ENCODE measurements at regions of chr1 and their contacts with region 1.

Region 1: GRCh38 chr1:210239349-210240111 is 6.9 kb downstream of the SERTAD4 start:
- DNase-seq: no peak
- H3K4me3 ChIP-seq: no peak overlapping the region
- H3K27ac ChIP-seq: no peak overlapping the region
- H3K4me1 ChIP-seq: peaks cover 0 to 14% (median 6%) of the 10 kb centered on the region in 4 experiments; a peak in 5 of 7 replicates
- H3K27me3 ChIP-seq: peaks cover 0 to 20% (median 6%) of the 10 kb centered on the region in 4 experiments; a peak in 4 of 7 replicates
- CTCF ChIP-seq: peak; percentile 58 to 68 (median 60)
- EP300 ChIP-seq: no peak
- POLR2A ChIP-seq: no peak
- RAD21 ChIP-seq: peak; percentile 55 to 62

Region 2: DNA sequence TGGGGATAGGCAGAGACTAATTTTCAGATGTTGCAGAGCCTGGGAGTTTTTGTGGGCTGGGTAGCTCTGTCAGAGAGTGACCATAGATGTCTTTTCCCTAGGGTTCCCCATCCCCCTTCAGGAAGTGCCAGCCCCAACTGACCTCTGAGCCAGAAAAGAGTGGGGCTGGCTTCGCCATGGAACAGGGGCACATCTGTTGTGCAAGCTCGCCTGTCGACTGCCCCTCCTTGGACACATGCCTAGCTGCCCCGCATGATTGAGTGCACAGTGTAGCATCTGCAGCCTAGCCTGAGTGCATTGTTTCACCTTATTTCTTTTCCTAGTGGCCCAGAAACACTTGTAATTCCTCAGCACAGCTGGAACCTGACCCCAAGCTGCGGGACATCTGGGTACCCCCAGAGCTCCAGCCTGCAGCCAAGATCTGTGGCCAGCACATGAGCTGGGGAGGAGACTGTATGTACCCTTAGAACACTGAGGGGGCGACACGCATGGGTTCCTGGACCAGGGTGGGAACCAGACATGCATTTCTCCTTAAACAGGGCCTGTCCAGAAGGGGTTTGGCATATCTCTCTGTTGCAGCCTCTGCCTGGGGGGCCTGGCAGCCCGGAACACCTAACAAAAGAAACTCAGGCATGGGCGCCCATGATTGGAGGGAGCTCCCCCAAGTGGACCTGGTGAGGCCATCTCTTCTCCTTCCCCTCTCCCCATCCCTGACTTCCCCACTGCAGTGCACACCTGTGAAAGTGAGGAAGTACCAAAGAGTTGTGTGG is 246.3 kb before region 1 on chr1:
- CTCF ChIA-PET with region 1: no interaction called
- POLR2A ChIA-PET with region 1: no interaction called
- DNase-seq: no peak
- H3K4me3 ChIP-seq: no peak overlapping the region
- H3K27ac ChIP-seq: no peak overlapping the region
- H3K4me1 ChIP-seq: no peaks in the 10 kb centered on the region; a peak in 1 of 7 replicates
- H3K27me3 ChIP-seq: no peaks in the 10 kb centered on the region
- CTCF ChIP-seq: no peak
- EP300 ChIP-seq: no peak
- POLR2A ChIP-seq: no peak
- RAD21 ChIP-seq: no peak

Region 3: GRCh38 chr1:210222340-210223006 is 17.1 kb before region 1 on chr1:
- CTCF ChIA-PET with region 1: interaction called, 10 read pairs
- POLR2A ChIA-PET with region 1: no interaction called
- DNase-seq: no peak
- H3K4me3 ChIP-seq: no peak overlapping the region
- H3K27ac ChIP-seq: no peak overlapping the region
- H3K4me1 ChIP-seq: peaks cover 0 to 3% (median 0%) of the 10 kb centered on the region in 4 experiments; a peak in 1 of 7 replicates
- H3K27me3 ChIP-seq: no peaks in the 10 kb centered on the region; a peak in 1 of 7 replicates
- CTCF ChIP-seq: no peak
- EP300 ChIP-seq: no peak
- POLR2A ChIP-seq: no peak
- RAD21 ChIP-seq: no peak

Region 4: DNA sequence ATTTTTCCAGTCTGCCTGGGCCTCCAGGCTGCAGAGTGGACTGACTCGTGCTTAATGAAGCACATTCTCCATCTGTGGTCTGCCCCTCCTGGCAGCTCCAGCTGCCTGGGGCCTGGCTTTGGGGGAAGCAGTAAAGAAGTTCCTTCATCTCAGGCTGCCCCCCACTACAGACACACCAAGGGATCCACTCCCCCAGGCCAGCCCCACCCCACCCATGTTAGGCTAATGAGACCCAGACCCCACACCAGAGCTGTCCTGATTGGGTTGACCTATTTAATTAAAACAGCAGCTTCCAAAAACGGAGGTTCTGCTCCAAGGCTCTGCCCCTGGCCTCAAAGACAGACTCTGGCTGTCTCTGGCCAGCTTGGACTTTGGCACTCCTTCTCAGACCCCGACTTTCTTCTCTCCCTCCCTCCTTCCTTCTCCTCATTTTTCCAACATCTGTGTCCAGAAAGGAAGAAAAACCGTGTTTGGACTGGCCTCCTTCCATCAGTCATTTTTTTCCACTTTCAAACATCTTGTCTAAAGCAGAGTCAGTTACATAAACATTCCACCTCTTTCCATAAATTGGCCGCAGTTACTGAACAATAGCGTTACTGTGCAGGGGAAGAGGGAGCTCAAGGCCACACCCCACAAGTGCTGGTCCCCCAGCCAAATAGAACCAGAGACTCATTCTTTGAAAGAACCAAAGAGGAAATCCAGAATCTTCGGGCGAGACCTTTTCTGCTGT is 22.8 kb after region 1 on chr1:
- CTCF ChIA-PET with region 1: interaction called, 13 read pairs
- POLR2A ChIA-PET with region 1: interaction called, 6 read pairs
- DNase-seq: no peak
- H3K4me3 ChIP-seq: no peak overlapping the region
- H3K27ac ChIP-seq: no peak overlapping the region
- H3K4me1 ChIP-seq: peaks cover 0 to 13% (median 2%) of the 10 kb centered on the region in 4 experiments; a peak in 2 of 7 replicates
- H3K27me3 ChIP-seq: no peaks in the 10 kb centered on the region
- CTCF ChIP-seq: no peak
- EP300 ChIP-seq: no peak
- POLR2A ChIP-seq: no peak
- RAD21 ChIP-seq: no peak

Region 5: GRCh38 chr1:210292231-210292871 is 52.8 kb after region 1 on chr1:
- CTCF ChIA-PET with region 1: interaction called, 14 read pairs
- POLR2A ChIA-PET with region 1: no interaction called
- DNase-seq: peak in 1 of 2 experiments; percentile 89
- H3K4me3 ChIP-seq: peak overlapping the region; percentile 42 to 68 (median 50)
- H3K27ac ChIP-seq: no peak overlapping the region
- H3K4me1 ChIP-seq: peaks cover 0 to 13% (median 6%) of the 10 kb centered on the region in 4 experiments; a peak in 5 of 7 replicates
- H3K27me3 ChIP-seq: peaks cover 0 to 13% (median 9%) of the 10 kb centered on the region in 4 experiments; a peak in 4 of 7 replicates
- CTCF ChIP-seq: peak; percentile 37 to 75 (median 55)
- EP300 ChIP-seq: no peak
- POLR2A ChIP-seq: no peak
- RAD21 ChIP-seq: peak in 1 of 2 experiments; percentile 47; a peak in 2 of 4 replicates

Region 6: GRCh38 chr1:210323957-210324356 is 84.4 kb after region 1 on chr1:
- CTCF ChIA-PET with region 1: no interaction called
- POLR2A ChIA-PET with region 1: no interaction called
- DNase-seq: no peak
- H3K4me3 ChIP-seq: no peak overlapping the region
- H3K27ac ChIP-seq: no peak overlapping the region
- H3K4me1 ChIP-seq: peaks cover 0 to 5% (median 0%) of the 10 kb centered on the region in 4 experiments; a peak in 2 of 7 replicates
- H3K27me3 ChIP-seq: peaks cover 12 to 21% (median 18%) of the 10 kb centered on the region in 4 experiments
- CTCF ChIP-seq: no peak
- EP300 ChIP-seq: no peak
- POLR2A ChIP-seq: no peak
- RAD21 ChIP-seq: no peak

Region 7: GRCh38 chr1:210335001-210335400 is 95.5 kb after region 1 on chr1:
- CTCF ChIA-PET with region 1: no interaction called
- POLR2A ChIA-PET with region 1: no interaction called
- DNase-seq: no peak
- H3K4me3 ChIP-seq: no peak overlapping the region
- H3K27ac ChIP-seq: no peak overlapping the region
- H3K4me1 ChIP-seq: no peaks in the 10 kb centered on the region
- H3K27me3 ChIP-seq: peaks cover 27 to 41% (median 33%) of the 10 kb centered on the region in 4 experiments
- CTCF ChIP-seq: no peak
- EP300 ChIP-seq: no peak
- POLR2A ChIP-seq: no peak
- RAD21 ChIP-seq: no peak

Region 8: DNA sequence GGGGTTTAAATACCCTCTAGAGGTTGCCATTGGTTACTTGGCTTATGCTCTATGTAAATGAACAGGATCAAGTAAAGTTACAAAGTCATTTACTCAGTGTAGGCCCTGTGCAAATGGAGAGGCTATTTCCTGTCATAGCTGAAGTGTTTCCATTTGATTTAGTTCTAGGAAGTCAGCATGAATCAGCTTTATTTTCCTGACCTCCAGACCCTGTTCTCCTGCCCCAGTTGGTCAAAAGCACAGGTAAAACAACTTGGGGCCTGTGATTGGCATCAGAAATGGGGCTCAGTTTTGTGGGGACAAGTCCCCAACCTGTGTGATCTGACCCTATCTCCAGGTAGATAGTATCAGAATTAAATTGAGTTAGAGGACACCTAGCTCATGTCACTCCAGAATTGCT is 329.1 kb after region 1 on chr1:
- CTCF ChIA-PET with region 1: no interaction called
- POLR2A ChIA-PET with region 1: no interaction called
- DNase-seq: no peak
- H3K4me3 ChIP-seq: no peak overlapping the region
- H3K27ac ChIP-seq: no peak overlapping the region
- H3K4me1 ChIP-seq: no peaks in the 10 kb centered on the region
- H3K27me3 ChIP-seq: no peaks in the 10 kb centered on the region
- CTCF ChIP-seq: no peak
- EP300 ChIP-seq: no peak
- POLR2A ChIP-seq: no peak
- RAD21 ChIP-seq: no peak